Heart left ventricle (tissue), 16 donors: ENCODE measurements at regions of chr2 and their contacts with region 1.

Region 1: DNA sequence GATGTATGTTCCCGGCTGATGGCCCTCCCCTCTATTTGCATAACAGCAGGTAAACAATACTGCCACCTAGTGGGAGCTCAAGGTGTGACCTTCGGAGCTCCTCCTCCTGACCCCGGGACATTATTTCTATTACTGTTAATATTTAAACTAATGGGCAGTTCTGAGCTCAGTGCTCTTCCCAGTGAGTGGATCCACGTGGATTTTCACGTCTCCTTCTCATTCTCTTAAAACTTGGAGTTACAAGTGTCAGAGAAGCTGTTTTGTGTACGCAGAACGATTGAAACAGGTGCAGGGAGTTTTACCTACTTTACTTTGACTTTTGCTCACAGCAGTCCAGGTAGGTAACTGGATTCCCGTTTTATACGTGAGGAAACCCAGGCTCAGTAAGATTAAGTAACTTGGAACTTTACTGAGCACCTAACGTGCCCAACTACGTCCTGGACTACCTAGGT is 127.3 kb downstream of the PRKCE start:
- DNase-seq: peak in 4 of 5 donors; percentile 44 to 72 (median 65)
- ATAC-seq: peak; percentile 50 to 64 (median 58)
- H3K4me3 ChIP-seq: no peak overlapping the region
- H3K27ac ChIP-seq: no peak overlapping the region
- H3K4me1 ChIP-seq: peaks cover 0 to 48% (median 24%) of the 10 kb centered on the region in 12 donors
- H3K27me3 ChIP-seq: no peaks in the 10 kb centered on the region
- CTCF ChIP-seq: peak; percentile 69 to 88 (median 80)
- POLR2A ChIP-seq: no peak

Region 2: GRCh38 chr2:45860136-45861121 is 81.7 kb after region 1 on chr2:
- intact Hi-C with region 1: loop called in 2 of 10 experiments (anchors 5 kb)
- DNase-seq: peak; percentile 53 to 81 (median 64)
- ATAC-seq: peak; percentile 42 to 79 (median 66)
- H3K4me3 ChIP-seq: peak overlapping the region in 9 of 12 donors; percentile 22 to 50 (median 34)
- H3K27ac ChIP-seq: peak overlapping the region in 11 of 12 donors; percentile 41 to 73 (median 48)
- H3K4me1 ChIP-seq: peaks cover 4 to 61% (median 28%) of the 10 kb centered on the region in 12 donors
- H3K27me3 ChIP-seq: no peaks in the 10 kb centered on the region
- CTCF ChIP-seq: peak in 7 of 12 donors; percentile 8 to 35 (median 22)
- POLR2A ChIP-seq: no peak